ENCODE measurements at regions of chr17 and their contacts with region 1.

Region 1: DNA sequence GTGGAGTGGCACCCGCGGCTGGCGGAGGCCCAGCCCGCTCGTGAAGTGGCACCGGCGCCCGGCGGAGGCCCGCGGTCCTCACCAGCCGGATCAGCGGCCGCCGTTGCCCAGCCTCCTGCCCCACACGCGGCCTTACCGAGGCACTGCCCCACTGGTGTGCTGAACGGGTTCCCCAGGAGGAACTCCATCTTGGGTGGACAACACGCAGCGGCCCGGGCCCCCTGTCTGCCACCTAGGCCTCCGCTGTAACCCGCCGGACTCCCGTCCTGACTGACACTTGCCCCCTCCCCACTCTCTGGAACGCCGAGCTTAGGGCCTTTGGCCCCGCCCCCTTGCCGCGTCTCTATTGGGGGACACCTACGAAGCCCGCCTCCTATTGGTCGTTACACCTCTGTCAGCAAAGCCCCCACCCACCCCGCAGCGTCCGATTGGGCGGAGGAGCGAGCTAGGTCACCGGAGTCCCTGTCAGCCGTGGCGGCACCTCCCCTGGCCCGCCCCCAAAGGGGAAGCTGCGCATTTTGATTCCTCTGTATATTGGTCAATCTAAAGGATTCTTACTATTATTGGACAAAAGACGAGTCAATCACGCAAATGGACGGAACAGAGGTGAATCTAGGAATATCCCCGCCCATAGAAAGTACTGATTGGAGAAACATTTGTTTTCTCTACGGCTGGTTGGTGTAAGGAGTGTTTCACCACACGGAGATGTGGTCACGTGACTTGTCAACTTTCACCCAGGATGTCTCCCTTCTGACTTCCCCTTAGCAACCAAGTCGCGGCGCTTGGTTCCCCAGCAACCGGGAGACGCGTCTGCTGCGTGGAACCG is at the starts of genes DRC3 and TOM1L2:
- DNase-seq: peak; percentile 100
- H3K4me3 ChIP-seq: peak within 1 kb of the TSS; percentile 75 to 98 (median 84)
- H3K27ac ChIP-seq: peak within 1 kb of the TSS; percentile 89 to 95 (median 94)
- H3K4me1 ChIP-seq: peaks cover 0 to 38% (median 27%) of the 10 kb centered on the region in 4 donors
- H3K27me3 ChIP-seq: no peaks in the 10 kb centered on the region
- CTCF ChIP-seq: peak in 1 of 4 experiments; percentile 9
- EP300 ChIP-seq: no peak
- POLR2A ChIP-seq: peak; percentile 85 to 90
- total RNA-seq, gene DRC3: 0.36 to 6.1 (median 1.8) TPM
- total RNA-seq, gene TOM1L2: 38.2 to 215 (median 66.2) TPM

Region 2: DNA sequence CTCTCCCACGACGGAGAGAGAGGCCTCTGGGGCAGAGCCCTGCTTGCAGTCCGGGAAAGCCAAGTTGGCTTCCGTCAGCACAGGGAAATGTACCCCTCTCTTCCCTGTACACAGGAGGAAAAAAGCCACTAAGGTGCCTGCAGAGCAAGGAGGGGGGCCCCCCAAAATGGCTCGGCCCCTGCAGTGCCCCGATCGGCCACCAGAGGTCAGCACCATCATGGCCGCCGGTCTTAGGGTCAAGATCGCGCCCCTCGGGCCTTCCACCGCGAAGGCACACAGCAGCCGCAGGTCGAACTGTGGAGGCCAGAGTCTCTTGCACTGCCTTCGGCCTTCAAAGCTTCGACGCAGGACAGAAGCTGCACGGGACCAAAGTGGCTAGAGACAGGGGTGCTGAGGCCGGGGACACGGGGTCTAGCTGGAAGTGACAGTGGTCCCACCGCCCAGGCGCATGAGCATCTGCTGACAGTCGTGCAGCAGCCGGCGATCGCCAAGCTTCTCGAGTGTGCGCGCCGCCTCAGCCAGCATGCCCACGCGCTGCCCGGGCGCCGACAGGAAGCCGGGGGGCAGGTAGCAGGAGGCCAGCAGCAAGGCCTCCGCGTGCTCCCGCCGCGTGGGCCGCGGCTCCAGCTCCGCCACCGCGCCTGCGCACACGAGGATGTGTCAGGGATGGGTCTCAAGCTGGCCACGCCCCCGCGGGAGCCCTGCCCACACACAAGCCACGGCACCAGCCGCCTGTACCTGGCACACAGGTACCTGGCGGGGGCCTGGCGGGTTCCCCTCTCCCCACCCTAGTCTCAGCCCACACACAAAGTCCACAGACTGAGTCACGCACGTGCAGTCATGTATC is 159.9 kb before region 1 on chr17:
- intact Hi-C with region 1: loop called (anchors 5 kb)
- DNase-seq: peak; percentile 89
- H3K4me3 ChIP-seq: no peak overlapping the region
- H3K27ac ChIP-seq: peak overlapping the region; percentile 31 to 90 (median 83)
- H3K4me1 ChIP-seq: peaks cover 0 to 66% (median 57%) of the 10 kb centered on the region in 4 donors
- H3K27me3 ChIP-seq: no peaks in the 10 kb centered on the region
- CTCF ChIP-seq: peak; percentile 99 to 100 (median 100)
- EP300 ChIP-seq: no peak
- POLR2A ChIP-seq: no peak

Region 3: DNA sequence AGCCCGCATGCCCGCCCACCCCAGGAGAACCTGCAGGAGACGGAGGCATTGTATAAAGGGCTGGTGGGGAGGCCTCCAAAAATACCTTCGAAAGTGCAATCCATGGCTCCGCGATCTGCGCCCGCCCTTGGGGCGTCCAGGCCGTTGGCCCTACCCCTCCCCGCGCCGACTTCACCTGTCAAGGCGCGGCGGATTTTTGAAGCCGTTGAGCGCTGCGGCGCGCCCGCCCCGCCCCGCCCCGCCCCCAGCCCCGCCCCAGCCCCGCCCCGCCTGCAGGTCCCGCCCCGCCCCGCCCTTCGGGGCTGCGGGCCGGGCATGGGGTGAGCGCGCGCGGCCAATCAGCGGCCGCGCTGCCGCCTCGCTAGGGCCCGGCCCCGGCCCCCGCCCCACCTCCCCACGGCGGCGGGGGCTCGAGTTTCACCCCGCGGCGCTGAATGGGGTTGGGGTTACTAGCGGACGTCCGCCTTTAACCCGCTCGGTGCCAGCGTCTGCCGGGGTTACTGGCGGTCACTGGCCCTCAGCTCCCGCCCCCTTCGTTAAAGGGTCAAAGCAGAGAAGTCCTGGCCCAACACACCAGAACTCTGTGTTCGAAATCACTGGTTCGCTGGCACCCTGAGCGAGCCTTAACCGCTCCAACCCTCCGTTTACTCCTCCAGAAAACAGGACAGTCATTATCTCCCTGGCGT is 148.8 kb before region 1 on chr17:
- intact Hi-C with region 1: no loop called
- DNase-seq: peak; percentile 96
- H3K4me3 ChIP-seq: peak overlapping the region; percentile 32 to 55 (median 52)
- H3K27ac ChIP-seq: peak overlapping the region; percentile 83 to 90 (median 86)
- H3K4me1 ChIP-seq: peaks cover 0 to 86% (median 81%) of the 10 kb centered on the region in 4 donors
- H3K27me3 ChIP-seq: no peaks in the 10 kb centered on the region
- CTCF ChIP-seq: no peak
- EP300 ChIP-seq: peak in 1 of 4 donors; percentile 53
- POLR2A ChIP-seq: peak in 1 of 2 donors; percentile 48

Region 4: GRCh38 chr17:17877529-17878358 is 94.6 kb before region 1 on chr17:
- intact Hi-C with region 1: loop called (anchors 5 kb)
- DNase-seq: peak; percentile 96
- H3K4me3 ChIP-seq: no peak overlapping the region
- H3K27ac ChIP-seq: peak overlapping the region; percentile 85 to 92 (median 88)
- H3K4me1 ChIP-seq: peaks cover 0 to 70% (median 50%) of the 10 kb centered on the region in 4 donors
- H3K27me3 ChIP-seq: no peaks in the 10 kb centered on the region
- CTCF ChIP-seq: peak in 1 of 4 experiments; percentile 9
- EP300 ChIP-seq: peak in 3 of 4 donors; percentile 53 to 75 (median 62)
- POLR2A ChIP-seq: no peak

Region 5: GRCh38 chr17:17919169-17920107 is 52.9 kb before region 1 on chr17:
- intact Hi-C with region 1: loop called (anchors 2 kb)
- DNase-seq: peak; percentile 89
- H3K4me3 ChIP-seq: no peak overlapping the region
- H3K27ac ChIP-seq: peak overlapping the region in 3 of 4 donors; percentile 33 to 51 (median 50)
- H3K4me1 ChIP-seq: peaks cover 0 to 54% (median 47%) of the 10 kb centered on the region in 4 donors
- H3K27me3 ChIP-seq: no peaks in the 10 kb centered on the region
- CTCF ChIP-seq: peak; percentile 52 to 80 (median 67)
- EP300 ChIP-seq: no peak
- POLR2A ChIP-seq: no peak

Region 6: DNA sequence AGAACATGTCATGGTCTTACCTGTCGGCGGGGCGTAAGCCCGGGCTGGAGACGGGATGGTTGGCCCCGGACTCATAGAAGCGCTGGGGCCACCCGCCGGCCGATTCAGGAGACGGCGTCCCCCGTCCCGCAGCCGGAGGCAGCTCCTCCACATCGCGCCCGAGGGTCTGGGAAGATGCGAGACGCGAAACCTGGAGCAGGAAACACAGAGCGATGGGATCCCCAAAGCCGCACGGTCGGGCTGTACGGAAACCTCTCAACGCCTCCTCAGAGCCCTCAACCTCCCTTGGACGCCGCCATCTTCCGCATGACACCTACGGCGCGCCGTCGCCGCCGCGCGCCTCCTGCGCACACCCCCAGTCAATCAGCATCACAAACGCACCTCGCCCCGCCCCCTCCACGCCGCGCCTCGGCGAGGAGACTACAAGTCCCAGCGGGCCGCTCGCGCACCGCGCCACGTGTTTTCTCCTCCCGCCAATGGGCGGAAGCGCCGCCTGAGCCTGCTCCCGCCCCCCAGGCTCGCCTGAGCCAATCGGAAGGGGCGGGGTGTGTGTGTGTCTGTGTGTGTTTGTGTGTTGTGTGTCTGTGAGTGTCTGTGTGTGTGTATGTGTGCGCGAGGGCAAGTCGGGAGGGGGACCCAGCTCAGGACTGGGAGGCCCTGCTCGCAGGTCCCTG is 66.7 kb after region 1 on chr17 and contains the starts of genes ATPAF2 and GID4:
- intact Hi-C with region 1: loop called (anchors 5 kb)
- DNase-seq: peak; percentile 100
- H3K4me3 ChIP-seq: peak within 1 kb of the TSS; percentile 80 to 96 (median 87)
- H3K27ac ChIP-seq: peak within 1 kb of the TSS; percentile 84 to 91 (median 89)
- H3K4me1 ChIP-seq: peaks cover 0 to 45% (median 37%) of the 10 kb centered on the region in 4 donors
- H3K27me3 ChIP-seq: no peaks in the 10 kb centered on the region
- CTCF ChIP-seq: no peak
- EP300 ChIP-seq: no peak
- POLR2A ChIP-seq: no peak
- total RNA-seq, gene ATPAF2: 10.3 to 28.8 (median 15.3) TPM
- total RNA-seq, gene GID4: 20.0 to 25.2 (median 23.9) TPM

Region 7: GRCh38 chr17:18314731-18315561 is 342.6 kb after region 1 on chr17 and contains the starts of genes SMCR8 and TOP3A:
- intact Hi-C with region 1: no loop called
- DNase-seq: peak; percentile 99
- H3K4me3 ChIP-seq: peak within 1 kb of the TSS; percentile 81 to 93 (median 90)
- H3K27ac ChIP-seq: peak within 1 kb of the TSS; percentile 85 to 92 (median 90)
- H3K4me1 ChIP-seq: peaks cover 0 to 71% (median 63%) of the 10 kb centered on the region in 4 donors
- H3K27me3 ChIP-seq: no peaks in the 10 kb centered on the region
- CTCF ChIP-seq: no peak
- EP300 ChIP-seq: peak in 1 of 4 donors; percentile 37
- POLR2A ChIP-seq: peak in 1 of 2 donors; percentile 26
- total RNA-seq, gene SMCR8: 9.3 to 12.2 (median 10.6) TPM
- total RNA-seq, gene TOP3A: 22.1 to 42.4 (median 26.0) TPM

Measured in sigmoid colon (tissue), 7 donors.